Endothelial cell of umbilical vein (primary cell): ENCODE measurements at regions of chr1 and their contacts with region 1.

Region 1: DNA sequence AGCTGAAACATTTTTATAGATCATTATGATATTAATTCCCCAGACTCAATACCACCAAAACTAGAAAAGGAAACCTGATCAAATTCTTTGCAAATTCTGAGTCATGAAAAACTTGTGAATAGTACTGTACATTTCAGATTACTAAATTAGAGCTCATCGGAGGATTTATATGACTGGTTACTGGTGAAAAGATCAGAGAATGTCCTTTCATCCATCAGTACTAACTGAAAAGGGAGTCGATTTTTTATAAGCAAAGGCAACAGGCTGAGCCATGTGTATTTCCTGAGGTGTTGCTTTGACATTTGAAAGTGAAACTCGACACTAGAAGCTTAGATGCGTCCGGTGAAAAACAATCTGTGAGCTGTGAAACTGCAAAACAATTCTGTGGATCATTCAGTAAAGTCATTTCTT is 155.7 kb downstream of the TNFSF18 start:
- DNase-seq: peak; percentile 85
- H3K4me3 ChIP-seq: peak overlapping the region in 1 of 3 experiments; percentile 41
- H3K27ac ChIP-seq: peak overlapping the region; percentile 65
- H3K4me1 ChIP-seq: peaks cover 70% of the 10 kb centered on the region
- H3K27me3 ChIP-seq: no peaks in the 10 kb centered on the region
- CTCF ChIP-seq: no peak
- POLR2A ChIP-seq: no peak

Region 2: DNA sequence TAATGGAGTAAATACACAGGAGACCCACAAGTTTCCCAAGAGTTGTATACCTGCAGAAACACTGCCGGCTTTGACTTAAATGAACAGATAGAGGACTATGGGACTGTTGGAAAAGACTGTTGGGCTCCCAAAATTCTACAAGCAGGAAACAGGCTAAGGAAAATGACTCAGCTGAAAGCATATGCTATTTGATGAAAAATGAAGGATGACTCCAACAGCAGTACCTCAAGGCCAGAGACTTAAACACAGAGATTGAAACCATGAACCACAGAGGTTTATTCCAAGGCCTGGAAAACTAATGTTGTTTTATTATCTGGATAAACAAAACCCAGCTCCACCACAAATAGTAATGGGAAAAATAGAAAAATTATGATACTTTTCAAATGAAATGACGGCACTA is 32.0 kb before region 1 on chr1:
- CTCF ChIA-PET with region 1: interaction called, 4 read pairs
- POLR2A ChIA-PET with region 1: no interaction called
- dilution Hi-C with region 1: no loop called
- intact Hi-C with region 1: loop called (anchors 2 kb)
- DNase-seq: no peak
- H3K4me3 ChIP-seq: no peak overlapping the region
- H3K27ac ChIP-seq: no peak overlapping the region
- H3K4me1 ChIP-seq: peaks cover 17% of the 10 kb centered on the region
- H3K27me3 ChIP-seq: no peaks in the 10 kb centered on the region
- CTCF ChIP-seq: no peak
- POLR2A ChIP-seq: no peak

Region 3: DNA sequence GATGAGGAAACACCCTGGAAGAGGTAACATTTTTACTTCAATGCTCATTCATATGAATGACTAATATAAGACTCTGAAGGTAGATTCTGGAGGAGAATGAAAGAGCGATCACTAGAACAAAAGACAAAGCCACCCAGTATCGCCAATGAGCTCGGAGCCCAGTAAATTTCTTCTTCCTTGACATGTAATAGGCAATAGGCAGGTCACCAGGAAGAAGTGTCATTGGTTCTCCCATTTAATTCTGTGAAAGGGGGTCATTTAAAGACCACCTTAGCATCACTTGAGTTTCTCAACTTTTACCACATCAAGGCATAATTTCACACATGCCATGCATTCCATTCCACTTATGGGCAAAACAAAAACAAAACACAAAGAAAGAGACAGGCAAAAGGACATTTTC is 147.8 kb after region 1 on chr1:
- CTCF ChIA-PET with region 1: no interaction called
- POLR2A ChIA-PET with region 1: no interaction called
- dilution Hi-C with region 1: no loop called
- intact Hi-C with region 1: no loop called
- DNase-seq: no peak
- H3K4me3 ChIP-seq: peak overlapping the region in 1 of 3 experiments; percentile 7
- H3K27ac ChIP-seq: peak overlapping the region; percentile 83
- H3K4me1 ChIP-seq: peaks cover 31% of the 10 kb centered on the region
- H3K27me3 ChIP-seq: no peaks in the 10 kb centered on the region
- CTCF ChIP-seq: no peak
- POLR2A ChIP-seq: no peak